ENCODE measurements at regions of chr13 and their contacts with region 1.

Region 1: GRCh38 chr13:44243198-44243857 is 130.3 kb upstream of the SERP2 start:
- DNase-seq: peak; percentile 92
- H3K4me3 ChIP-seq: no peak overlapping the region
- H3K27ac ChIP-seq: peak overlapping the region; percentile 69
- H3K4me1 ChIP-seq: peaks cover 11% of the 10 kb centered on the region
- H3K27me3 ChIP-seq: no peaks in the 10 kb centered on the region
- CTCF ChIP-seq: peak; percentile 53 to 73
- POLR2A ChIP-seq: no peak

Region 2: GRCh38 chr13:43303033-43303729 is 940.1 kb before region 1 on chr13:
- CTCF ChIA-PET with region 1: no interaction called
- POLR2A ChIA-PET with region 1: no interaction called
- dilution Hi-C with region 1: no loop called
- intact Hi-C with region 1: no loop called
- DNase-seq: peak; percentile 73
- H3K4me3 ChIP-seq: no peak overlapping the region
- H3K27ac ChIP-seq: no peak overlapping the region
- H3K4me1 ChIP-seq: peaks cover 57% of the 10 kb centered on the region
- H3K27me3 ChIP-seq: no peaks in the 10 kb centered on the region
- CTCF ChIP-seq: peak; percentile 64 to 70
- POLR2A ChIP-seq: no peak

Region 3: GRCh38 chr13:43905435-43906031 is 337.8 kb before region 1 on chr13:
- CTCF ChIA-PET with region 1: interaction called, 6 read pairs
- POLR2A ChIA-PET with region 1: no interaction called
- dilution Hi-C with region 1: no loop called
- intact Hi-C with region 1: loop called (anchors 1 kb)
- DNase-seq: peak; percentile 68
- H3K4me3 ChIP-seq: no peak overlapping the region
- H3K27ac ChIP-seq: no peak overlapping the region
- H3K4me1 ChIP-seq: no peaks in the 10 kb centered on the region
- H3K27me3 ChIP-seq: peaks cover 0 to 6% of the 10 kb centered on the region in 2 experiments
- CTCF ChIP-seq: peak; percentile 43 to 45
- POLR2A ChIP-seq: no peak

Region 4: GRCh38 chr13:44267966-44268365 is 24.6 kb after region 1 on chr13:
- CTCF ChIA-PET with region 1: no interaction called
- POLR2A ChIA-PET with region 1: no interaction called
- dilution Hi-C with region 1: no loop called
- intact Hi-C with region 1: no loop called
- DNase-seq: no peak
- H3K4me3 ChIP-seq: no peak overlapping the region
- H3K27ac ChIP-seq: no peak overlapping the region
- H3K4me1 ChIP-seq: no peaks in the 10 kb centered on the region
- H3K27me3 ChIP-seq: peaks cover 0 to 8% of the 10 kb centered on the region in 2 experiments
- CTCF ChIP-seq: no peak
- POLR2A ChIP-seq: no peak

Region 5: DNA sequence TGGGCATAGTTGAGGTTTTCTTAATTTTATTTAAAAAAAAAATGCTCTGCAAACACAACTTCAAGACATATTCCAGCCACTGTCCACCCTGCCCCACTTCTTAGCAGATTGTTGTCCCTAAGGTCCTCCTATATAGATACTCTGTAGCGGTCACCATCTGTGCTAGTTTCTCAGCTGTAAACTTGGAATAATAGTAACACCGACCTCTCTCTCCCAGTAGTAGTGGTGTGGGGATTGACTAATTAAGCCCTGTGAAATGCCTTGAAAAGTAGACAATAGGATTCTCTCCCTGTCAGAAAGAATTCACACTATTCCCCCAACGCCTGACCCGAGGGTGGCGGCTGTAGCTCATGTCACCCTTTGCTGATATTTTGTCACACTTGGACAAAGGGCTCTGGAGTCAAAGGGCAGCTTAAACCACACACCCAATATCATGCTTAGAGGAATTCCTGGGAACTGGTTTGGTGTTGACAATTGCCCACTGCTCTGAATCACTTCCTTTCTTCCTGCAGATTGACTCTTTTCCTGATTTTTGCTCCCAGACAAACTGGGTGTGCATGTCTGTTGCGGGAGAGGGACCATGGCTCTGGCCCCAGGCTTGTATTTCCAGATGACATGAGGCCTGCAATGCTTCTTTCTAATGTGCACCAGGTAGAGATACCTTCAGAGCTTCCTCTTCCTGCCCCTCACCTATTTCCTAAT is 121.2 kb after region 1 on chr13:
- CTCF ChIA-PET with region 1: interaction called, 3 read pairs
- POLR2A ChIA-PET with region 1: no interaction called
- dilution Hi-C with region 1: no loop called
- intact Hi-C with region 1: loop called (anchors 1 kb)
- DNase-seq: peak; percentile 90
- H3K4me3 ChIP-seq: no peak overlapping the region
- H3K27ac ChIP-seq: peak overlapping the region; percentile 89
- H3K4me1 ChIP-seq: peaks cover 51% of the 10 kb centered on the region
- H3K27me3 ChIP-seq: no peaks in the 10 kb centered on the region
- CTCF ChIP-seq: no peak
- POLR2A ChIP-seq: peak; percentile 25

Region 6: GRCh38 chr13:44470638-44471562 is 227.6 kb after region 1 on chr13:
- CTCF ChIA-PET with region 1: interaction called, 5 read pairs
- POLR2A ChIA-PET with region 1: no interaction called
- dilution Hi-C with region 1: no loop called
- intact Hi-C with region 1: loop called (anchors 1 kb)
- DNase-seq: peak; percentile 46
- H3K4me3 ChIP-seq: peak overlapping the region in 1 of 3 experiments; percentile 50
- H3K27ac ChIP-seq: peak overlapping the region; percentile 51
- H3K4me1 ChIP-seq: peaks cover 29% of the 10 kb centered on the region
- H3K27me3 ChIP-seq: no peaks in the 10 kb centered on the region
- CTCF ChIP-seq: peak; percentile 6 to 20
- POLR2A ChIP-seq: no peak

Measured in endothelial cell of umbilical vein (primary cell).